Naive thymus-derived CD4-positive, alpha-beta T cell (primary cell): ENCODE measurements at regions of chr3 and their contacts with region 1.

Region 1: DNA sequence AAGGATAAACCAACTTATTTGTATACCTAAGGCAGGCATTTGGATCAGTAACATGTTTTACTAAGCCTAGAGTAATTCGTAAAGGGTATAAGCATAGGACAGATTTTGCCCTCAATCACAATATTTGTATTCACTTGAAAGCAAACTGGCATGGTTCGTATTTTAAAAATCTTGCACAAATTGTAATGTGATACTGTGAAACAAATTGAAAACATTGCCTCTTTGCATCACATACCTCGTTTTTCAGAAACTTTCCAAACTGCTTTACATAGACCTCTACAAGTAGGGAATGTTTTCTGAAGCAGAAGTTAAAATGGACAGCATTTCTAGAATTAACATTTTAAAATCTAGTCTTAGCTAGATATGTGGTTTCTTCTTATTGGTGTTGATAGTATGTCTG is 11.6 kb downstream of the KBTBD8 start:
- DNase-seq: no peak
- ATAC-seq: no peak
- H3K4me3 ChIP-seq: no peak overlapping the region
- H3K4me3 Mint-ChIP-seq: no peak overlapping the region
- H3K27ac ChIP-seq: no peak overlapping the region
- H3K27ac Mint-ChIP-seq: no peak overlapping the region
- H3K4me1 ChIP-seq: peaks cover 0 to 6% of the 10 kb centered on the region in 2 donors
- H3K4me1 Mint-ChIP-seq: peaks cover 8 to 30% (median 20%) of the 10 kb centered on the region in 7 donors
- H3K27me3 ChIP-seq: no peaks in the 10 kb centered on the region
- H3K27me3 Mint-ChIP-seq: no peaks in the 10 kb centered on the region

Region 2: GRCh38 chr3:66989860-66990665 is 19.7 kb before region 1 on chr3:
- CTCF ChIA-PET with region 1: no interaction called
- POLR2A ChIA-PET with region 1: no interaction called
- intact Hi-C with region 1: loop called in 1 of 2 experiments (anchors 2 kb)
- DNase-seq: no peak
- ATAC-seq: peak; percentile 40
- H3K4me3 ChIP-seq: no peak overlapping the region
- H3K4me3 Mint-ChIP-seq: no peak overlapping the region
- H3K27ac ChIP-seq: no peak overlapping the region
- H3K27ac Mint-ChIP-seq: no peak overlapping the region
- H3K4me1 ChIP-seq: no peaks in the 10 kb centered on the region
- H3K4me1 Mint-ChIP-seq: no peaks in the 10 kb centered on the region
- H3K27me3 ChIP-seq: no peaks in the 10 kb centered on the region
- H3K27me3 Mint-ChIP-seq: peaks cover 14 to 26% (median 25%) of the 10 kb centered on the region in 5 donors

Region 3: GRCh38 chr3:67312155-67312554 is 302.4 kb after region 1 on chr3:
- CTCF ChIA-PET with region 1: no interaction called
- POLR2A ChIA-PET with region 1: no interaction called
- intact Hi-C with region 1: no loop called
- DNase-seq: no peak
- ATAC-seq: no peak
- H3K4me3 ChIP-seq: no peak overlapping the region
- H3K4me3 Mint-ChIP-seq: no peak overlapping the region
- H3K27ac ChIP-seq: no peak overlapping the region
- H3K27ac Mint-ChIP-seq: no peak overlapping the region
- H3K4me1 ChIP-seq: no peaks in the 10 kb centered on the region
- H3K4me1 Mint-ChIP-seq: no peaks in the 10 kb centered on the region
- H3K27me3 ChIP-seq: no peaks in the 10 kb centered on the region
- H3K27me3 Mint-ChIP-seq: no peaks in the 10 kb centered on the region